Activated CD4-positive, alpha-beta T cell treated with anti-CD3 and anti-CD28 coated beads for 36 hours (primary cell): ENCODE measurements at regions of chr11 and their contacts with region 1.

Region 1: GRCh38 chr11:57493507-57494503 is 21.7 kb downstream of the SLC43A1 start:
- DNase-seq: peak; percentile 88
- ATAC-seq: peak; percentile 81
- H3K4me3 Mint-ChIP-seq: no peak overlapping the region
- H3K27ac Mint-ChIP-seq: peak overlapping the region; percentile 89
- H3K4me1 Mint-ChIP-seq: peaks cover 9% of the 10 kb centered on the region
- H3K27me3 Mint-ChIP-seq: no peaks in the 10 kb centered on the region

Region 2: DNA sequence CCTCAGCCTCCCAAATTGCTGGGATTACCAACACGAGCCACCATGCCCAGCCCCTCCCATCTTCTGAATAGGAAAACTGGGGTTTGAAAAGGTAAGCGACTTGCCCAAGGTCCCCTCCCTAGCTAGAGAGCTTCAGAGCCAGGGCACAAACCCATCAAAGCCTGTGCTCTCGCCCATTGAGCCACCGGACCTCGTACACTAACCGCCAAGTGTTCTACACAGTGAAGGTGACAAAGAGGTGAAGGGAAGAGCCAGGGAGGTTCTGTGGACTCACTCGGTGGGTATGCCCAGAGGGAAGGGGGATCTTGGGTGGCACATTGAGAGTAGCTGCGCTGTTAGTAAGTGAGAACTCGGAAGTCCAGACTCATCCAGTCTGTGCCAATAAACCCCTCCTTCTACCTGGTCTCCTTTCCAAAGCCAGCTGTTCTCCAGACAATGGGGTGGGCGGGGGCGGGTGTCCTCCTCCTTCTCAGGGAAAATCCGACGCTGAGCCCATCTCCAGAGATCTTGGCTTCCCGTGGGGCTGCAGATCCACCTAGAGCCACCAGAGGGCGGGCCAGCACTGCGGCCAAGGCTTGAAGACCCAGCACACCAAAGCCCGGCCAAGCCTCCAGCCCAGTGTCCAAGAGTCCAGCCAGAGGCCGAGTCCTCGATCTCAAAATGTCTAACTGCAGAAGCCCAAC is 36.7 kb before region 1 on chr11:
- CTCF ChIA-PET with region 1: interaction called, 28 read pairs
- POLR2A ChIA-PET with region 1: no interaction called
- intact Hi-C with region 1: no loop called
- DNase-seq: peak; percentile 87
- ATAC-seq: peak; percentile 36
- H3K4me3 Mint-ChIP-seq: peak overlapping the region; percentile 15
- H3K27ac Mint-ChIP-seq: no peak overlapping the region
- H3K4me1 Mint-ChIP-seq: peaks cover 27% of the 10 kb centered on the region
- H3K27me3 Mint-ChIP-seq: peaks cover 25% of the 10 kb centered on the region

Region 3: GRCh38 chr11:57480409-57481137 is 13.2 kb before region 1 on chr11:
- CTCF ChIA-PET with region 1: interaction called, 53 read pairs
- POLR2A ChIA-PET with region 1: interaction called, 3 read pairs
- intact Hi-C with region 1: no loop called
- DNase-seq: peak; percentile 90
- ATAC-seq: peak; percentile 69
- H3K4me3 Mint-ChIP-seq: no peak overlapping the region
- H3K27ac Mint-ChIP-seq: no peak overlapping the region
- H3K4me1 Mint-ChIP-seq: peaks cover 15% of the 10 kb centered on the region
- H3K27me3 Mint-ChIP-seq: peaks cover 11% of the 10 kb centered on the region

Region 4: DNA sequence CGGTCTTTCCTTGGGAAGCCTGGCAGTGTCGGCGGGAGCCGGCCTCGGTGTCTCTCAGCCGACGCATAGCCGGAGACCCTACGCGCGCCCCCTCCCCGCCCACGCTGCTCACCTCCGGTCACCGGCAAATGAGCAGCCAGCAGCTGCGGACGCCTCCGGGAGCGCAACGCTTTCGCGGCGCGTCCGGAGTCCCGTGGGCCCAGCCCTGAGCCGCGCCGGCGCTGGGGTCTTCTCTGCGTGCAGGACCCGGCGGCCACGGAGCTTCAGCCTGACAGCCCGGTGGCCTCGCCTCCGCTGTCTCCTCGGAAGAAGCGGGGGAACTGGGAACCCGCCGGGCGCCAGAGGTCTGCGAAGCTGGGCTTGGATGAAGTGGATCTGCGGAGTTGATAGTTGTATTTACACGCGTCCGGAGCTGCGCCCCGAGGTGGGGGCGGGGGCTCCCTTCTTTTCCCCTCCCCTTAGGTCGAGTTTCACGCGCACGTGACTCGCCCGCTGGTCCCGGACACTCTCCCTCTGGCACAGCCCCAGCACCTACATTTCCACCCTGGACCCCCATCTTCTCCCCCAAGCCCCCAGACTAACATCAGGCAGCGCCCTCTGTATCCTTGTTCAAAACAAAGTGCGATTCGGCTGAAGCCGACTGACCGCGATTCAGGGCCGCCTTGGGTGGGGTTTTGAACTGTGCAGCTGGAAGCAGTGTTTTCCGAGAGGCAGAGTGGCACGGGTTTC is 21.7 kb after region 1 on chr11 and contains the start of gene SLC43A1:
- CTCF ChIA-PET with region 1: interaction called, 112 read pairs
- POLR2A ChIA-PET with region 1: interaction called, 3 read pairs
- intact Hi-C with region 1: loop called (anchors 1 to 2 kb)
- DNase-seq: peak; percentile 62
- ATAC-seq: peak; percentile 46
- H3K4me3 Mint-ChIP-seq: peak within 1 kb of the TSS; percentile 91
- H3K27ac Mint-ChIP-seq: peak within 1 kb of the TSS; percentile 91
- H3K4me1 Mint-ChIP-seq: peaks cover 31% of the 10 kb centered on the region
- H3K27me3 Mint-ChIP-seq: no peaks in the 10 kb centered on the region
- total RNA-seq, gene SLC43A1: 27.6 to 28.7 TPM